Common myeloid progenitor, CD34-positive (primary cell): ENCODE measurements at regions of chr20 and their contacts with region 1.

Region 1: DNA sequence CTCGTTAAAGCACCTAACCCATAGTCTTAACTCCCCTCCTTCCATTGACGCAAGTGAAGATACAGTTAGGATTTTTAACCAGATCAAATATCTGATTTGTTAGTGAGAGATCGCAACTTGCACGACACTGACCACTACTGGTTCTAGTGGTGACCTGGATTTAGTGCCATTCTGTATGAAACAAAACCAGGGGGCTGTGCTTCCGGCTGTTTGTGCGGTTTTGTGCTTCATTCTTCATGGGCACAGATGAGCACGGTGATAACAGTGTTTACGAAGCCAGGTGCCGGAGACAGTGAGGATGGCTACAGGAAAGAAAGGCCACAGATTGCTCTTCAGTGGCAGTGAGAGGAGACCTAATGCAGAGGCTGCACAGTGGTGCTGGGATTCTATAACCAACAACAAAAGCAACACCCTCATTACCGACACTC is 75.5 kb downstream of the NOL4L start:
- DNase-seq: peak; percentile 87 to 98 (median 97)
- H3K4me3 ChIP-seq: peak overlapping the region in 3 of 7 experiments; percentile 29 to 62 (median 38)
- H3K27ac ChIP-seq: peak overlapping the region in 1 of 2 experiments; percentile 55
- H3K4me1 ChIP-seq: peaks cover 17 to 77% (median 68%) of the 10 kb centered on the region in 4 experiments
- H3K27me3 ChIP-seq: no peaks in the 10 kb centered on the region

Region 2: GRCh38 chr20:32445539-32446273 is 63.9 kb before region 1 on chr20:
- CTCF ChIA-PET with region 1: no interaction called
- POLR2A ChIA-PET with region 1: no interaction called
- DNase-seq: peak; percentile 44 to 87 (median 86)
- H3K4me3 ChIP-seq: peak overlapping the region in 1 of 7 experiments; percentile 23
- H3K27ac ChIP-seq: peak overlapping the region; percentile 30 to 65
- H3K4me1 ChIP-seq: peaks cover 0 to 38% (median 25%) of the 10 kb centered on the region in 4 experiments
- H3K27me3 ChIP-seq: no peaks in the 10 kb centered on the region

Region 3: GRCh38 chr20:32470025-32470861 is 39.4 kb before region 1 on chr20:
- CTCF ChIA-PET with region 1: interaction called, 17 read pairs
- POLR2A ChIA-PET with region 1: no interaction called
- DNase-seq: peak; percentile 52 to 83 (median 70)
- H3K4me3 ChIP-seq: peak overlapping the region in 3 of 7 experiments; percentile 4 to 32 (median 18)
- H3K27ac ChIP-seq: peak overlapping the region; percentile 40 to 74
- H3K4me1 ChIP-seq: peaks cover 0 to 78% (median 75%) of the 10 kb centered on the region in 4 experiments
- H3K27me3 ChIP-seq: no peaks in the 10 kb centered on the region

Region 4: GRCh38 chr20:32484958-32485769 is 24.5 kb before region 1 on chr20:
- CTCF ChIA-PET with region 1: interaction called, 13 read pairs
- POLR2A ChIA-PET with region 1: interaction called, 18 read pairs
- DNase-seq: peak; percentile 84 to 93 (median 93)
- H3K4me3 ChIP-seq: peak overlapping the region; percentile 28 to 78 (median 65)
- H3K27ac ChIP-seq: peak overlapping the region in 1 of 2 experiments; percentile 49
- H3K4me1 ChIP-seq: peaks cover 0 to 44% (median 41%) of the 10 kb centered on the region in 4 experiments
- H3K27me3 ChIP-seq: no peaks in the 10 kb centered on the region

Region 5: GRCh38 chr20:32497589-32498224 is 11.9 kb before region 1 on chr20:
- CTCF ChIA-PET with region 1: interaction called, 55 read pairs
- POLR2A ChIA-PET with region 1: interaction called, 5 read pairs
- DNase-seq: peak in 2 of 3 donors; percentile 85 to 86
- H3K4me3 ChIP-seq: peak overlapping the region in 3 of 7 experiments; percentile 6 to 42 (median 29)
- H3K27ac ChIP-seq: peak overlapping the region in 1 of 2 experiments; percentile 27
- H3K4me1 ChIP-seq: peaks cover 0 to 24% (median 19%) of the 10 kb centered on the region in 4 experiments
- H3K27me3 ChIP-seq: no peaks in the 10 kb centered on the region